ENCODE measurements at regions of chr7 and their contacts with region 1.

Region 1: DNA sequence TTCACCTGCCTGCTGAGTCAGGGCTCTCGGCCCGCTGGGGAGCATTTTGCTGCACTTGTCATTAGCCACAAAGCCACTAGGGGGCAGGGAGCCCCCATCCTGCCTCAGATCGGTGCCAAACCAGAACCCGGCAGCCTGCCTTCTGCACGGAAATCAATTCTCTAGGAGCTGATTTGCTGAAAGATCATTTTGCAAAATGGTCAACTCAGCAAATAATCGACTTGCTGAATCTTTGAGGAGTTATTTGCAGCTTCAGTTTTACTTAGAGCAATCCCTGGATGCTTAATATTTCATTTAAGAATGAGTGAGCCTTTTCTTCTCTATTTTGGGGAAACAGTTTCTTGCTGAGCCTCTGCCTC is 1.7 kb upstream of the GIMAP8 start:
- DNase-seq: peak; percentile 77 to 91 (median 83)
- H3K4me3 ChIP-seq: peak overlapping the region; percentile 36
- H3K4me3 Mint-ChIP-seq: peak overlapping the region; percentile 98 to 100 (median 99)
- H3K27ac ChIP-seq: no peak overlapping the region
- H3K27ac Mint-ChIP-seq: peak overlapping the region; percentile 78 to 98 (median 96)
- H3K4me1 ChIP-seq: peaks cover 38% of the 10 kb centered on the region
- H3K4me1 Mint-ChIP-seq: peaks cover 51 to 58% (median 52%) of the 10 kb centered on the region in 3 donors
- H3K27me3 ChIP-seq: no peaks in the 10 kb centered on the region
- H3K27me3 Mint-ChIP-seq: peaks cover 0 to 4% of the 10 kb centered on the region in 2 donors

Region 2: DNA sequence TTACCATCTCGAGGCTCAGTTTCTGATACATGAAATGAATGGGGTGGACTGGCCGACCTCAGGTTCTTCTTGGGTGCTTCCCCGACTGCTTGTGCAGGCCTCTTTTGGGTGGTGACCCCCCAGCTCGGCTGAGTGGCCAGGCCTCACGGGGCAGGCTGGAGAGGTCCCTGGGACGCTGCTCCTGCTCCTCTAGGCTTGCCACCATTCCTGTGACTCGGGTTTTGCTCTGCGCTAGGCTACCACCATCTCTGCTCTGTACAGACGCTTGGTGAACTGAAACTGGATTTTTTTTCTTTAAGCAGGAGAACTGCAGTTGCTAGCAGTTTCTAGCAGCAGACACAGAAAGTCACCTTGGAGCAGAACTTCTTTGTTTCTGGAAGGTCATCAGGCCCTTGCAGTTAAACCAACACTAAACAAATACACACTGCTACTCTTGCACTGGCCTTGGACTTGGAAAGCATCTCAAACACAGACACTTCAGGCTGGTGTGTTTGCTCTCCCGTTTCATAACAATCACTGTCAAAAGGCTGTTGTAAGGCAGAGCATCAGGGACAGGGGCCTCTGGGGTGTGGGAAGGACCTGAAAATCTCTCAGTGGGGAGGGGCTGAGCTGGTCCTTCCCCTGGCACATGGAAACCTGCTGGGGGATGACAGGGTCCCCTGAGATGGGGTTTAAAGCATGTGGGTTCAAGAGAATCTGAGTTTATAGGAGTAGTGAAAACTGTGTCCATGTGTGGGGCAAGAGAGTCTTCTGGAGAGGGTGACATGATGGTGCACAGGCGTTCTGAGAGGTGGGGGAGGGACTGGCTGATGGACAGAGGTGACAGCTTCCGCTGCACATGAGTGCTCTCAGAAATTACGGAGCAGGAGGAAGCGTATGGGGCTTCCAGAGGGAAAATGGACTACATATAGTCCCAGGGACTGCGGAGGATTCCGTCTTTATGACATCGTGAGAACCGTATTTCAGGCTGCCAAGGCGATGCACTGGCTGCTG is 33.3 kb before region 1 on chr7:
- CTCF ChIA-PET with region 1: no interaction called
- POLR2A ChIA-PET with region 1: no interaction called
- DNase-seq: no peak
- H3K4me3 ChIP-seq: no peak overlapping the region
- H3K4me3 Mint-ChIP-seq: no peak overlapping the region
- H3K27ac ChIP-seq: no peak overlapping the region
- H3K27ac Mint-ChIP-seq: peak overlapping the region in 2 of 8 donors; percentile 23 to 64
- H3K4me1 ChIP-seq: no peaks in the 10 kb centered on the region
- H3K4me1 Mint-ChIP-seq: no peaks in the 10 kb centered on the region
- H3K27me3 ChIP-seq: no peaks in the 10 kb centered on the region
- H3K27me3 Mint-ChIP-seq: no peaks in the 10 kb centered on the region

Region 3: GRCh38 chr7:150481186-150481920 is 32.6 kb after region 1 on chr7:
- CTCF ChIA-PET with region 1: interaction called, 45 read pairs
- POLR2A ChIA-PET with region 1: interaction called, 33 read pairs
- DNase-seq: peak; percentile 32 to 78 (median 68)
- H3K4me3 ChIP-seq: peak overlapping the region; percentile 40
- H3K4me3 Mint-ChIP-seq: peak overlapping the region; percentile 72 to 91 (median 88)
- H3K27ac ChIP-seq: peak overlapping the region; percentile 75
- H3K27ac Mint-ChIP-seq: peak overlapping the region; percentile 94 to 100 (median 98)
- H3K4me1 ChIP-seq: peaks cover 98% of the 10 kb centered on the region
- H3K4me1 Mint-ChIP-seq: peaks cover 89 to 99% (median 98%) of the 10 kb centered on the region in 3 donors
- H3K27me3 ChIP-seq: no peaks in the 10 kb centered on the region
- H3K27me3 Mint-ChIP-seq: peaks cover 0 to 1% of the 10 kb centered on the region in 2 donors

Region 4: GRCh38 chr7:150514748-150515222 is 66.0 kb after region 1 on chr7 and contains the start of gene GIMAP7:
- CTCF ChIA-PET with region 1: interaction called, 99 read pairs
- POLR2A ChIA-PET with region 1: interaction called, 76 read pairs
- DNase-seq: peak; percentile 7 to 84 (median 68)
- H3K4me3 ChIP-seq: peak within 1 kb of the TSS; percentile 97
- H3K4me3 Mint-ChIP-seq: peak within 1 kb of the TSS; percentile 98 to 100 (median 100)
- H3K27ac ChIP-seq: peak within 1 kb of the TSS; percentile 77
- H3K27ac Mint-ChIP-seq: peak within 1 kb of the TSS; percentile 90 to 99 (median 96)
- H3K4me1 ChIP-seq: peaks cover 46% of the 10 kb centered on the region
- H3K4me1 Mint-ChIP-seq: peaks cover 45 to 49% (median 49%) of the 10 kb centered on the region in 3 donors
- H3K27me3 ChIP-seq: no peaks in the 10 kb centered on the region
- H3K27me3 Mint-ChIP-seq: no peaks in the 10 kb centered on the region
- total RNA-seq, gene GIMAP7: 47.3 to 51.4 TPM

Region 5: GRCh38 chr7:150567169-150567568 is 118.4 kb after region 1 on chr7 and contains the start of gene GIMAP4:
- CTCF ChIA-PET with region 1: interaction called, 27 read pairs
- POLR2A ChIA-PET with region 1: interaction called, 15 read pairs
- DNase-seq: peak in 2 of 5 donors; percentile 36 to 56
- H3K4me3 ChIP-seq: peak within 1 kb of the TSS; percentile 90
- H3K4me3 Mint-ChIP-seq: peak within 1 kb of the TSS; percentile 97 to 100 (median 100)
- H3K27ac ChIP-seq: peak within 1 kb of the TSS; percentile 67
- H3K27ac Mint-ChIP-seq: peak within 1 kb of the TSS; percentile 86 to 99 (median 98)
- H3K4me1 ChIP-seq: peaks cover 74% of the 10 kb centered on the region
- H3K4me1 Mint-ChIP-seq: peaks cover 72 to 86% (median 85%) of the 10 kb centered on the region in 3 donors
- H3K27me3 ChIP-seq: no peaks in the 10 kb centered on the region
- H3K27me3 Mint-ChIP-seq: peaks cover 0 to 4% of the 10 kb centered on the region in 2 donors
- total RNA-seq, gene GIMAP4: 57.3 to 59.3 TPM

Region 6: DNA sequence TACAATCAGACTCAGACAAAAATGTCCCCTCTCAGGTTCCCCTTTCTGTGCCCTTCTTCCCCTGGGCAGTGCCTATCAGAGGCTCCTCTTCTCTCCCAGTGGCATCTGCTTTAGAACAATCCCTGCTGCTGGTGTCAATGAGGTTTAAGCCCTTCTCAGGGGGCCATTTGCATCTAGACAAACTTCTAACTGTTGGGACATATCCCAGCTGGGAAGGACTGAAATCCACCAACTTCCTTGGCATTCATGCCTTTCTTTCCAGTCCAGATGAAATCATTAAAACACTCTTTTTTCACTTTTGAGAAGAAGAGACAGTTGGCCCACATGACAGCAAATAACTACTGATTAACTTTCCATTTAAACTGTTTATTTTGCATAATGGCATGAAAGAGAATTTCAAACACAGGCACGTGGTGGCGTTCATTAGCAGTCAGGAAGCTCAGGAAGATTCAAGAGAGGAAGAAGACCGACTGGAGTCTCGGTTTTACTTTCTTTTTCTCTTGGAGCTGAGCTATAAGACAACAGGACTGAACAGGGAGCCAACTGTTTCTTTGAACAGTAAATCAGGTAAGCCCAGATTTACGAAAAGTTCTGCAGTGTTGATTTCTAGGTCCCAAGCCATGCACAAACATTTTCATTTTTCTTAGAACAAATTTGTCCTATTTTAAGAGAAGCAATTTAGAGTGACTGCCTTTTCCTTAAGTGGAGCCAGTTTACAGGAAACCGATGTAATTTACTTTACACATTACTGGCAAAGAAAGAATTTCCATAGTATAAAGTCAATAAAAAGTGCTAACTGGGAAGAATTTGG is 236.7 kb after region 1 on chr7 and contains the start of gene GIMAP2:
- CTCF ChIA-PET with region 1: interaction called, 10 read pairs
- POLR2A ChIA-PET with region 1: interaction called, 3 read pairs
- DNase-seq: peak in 3 of 5 donors; percentile 57 to 67 (median 59)
- H3K4me3 ChIP-seq: peak within 1 kb of the TSS; percentile 79
- H3K4me3 Mint-ChIP-seq: peak within 1 kb of the TSS; percentile 94 to 100 (median 97)
- H3K27ac ChIP-seq: peak within 1 kb of the TSS; percentile 60
- H3K27ac Mint-ChIP-seq: peak within 1 kb of the TSS; percentile 93 to 100 (median 97)
- H3K4me1 ChIP-seq: peaks cover 56% of the 10 kb centered on the region
- H3K4me1 Mint-ChIP-seq: peaks cover 76 to 93% (median 83%) of the 10 kb centered on the region in 3 donors
- H3K27me3 ChIP-seq: no peaks in the 10 kb centered on the region
- H3K27me3 Mint-ChIP-seq: no peaks in the 10 kb centered on the region
- total RNA-seq, gene GIMAP2: 40.4 to 42.9 TPM

Region 7: GRCh38 chr7:150737265-150738055 is 288.7 kb after region 1 on chr7 and contains the start of gene GIMAP5:
- CTCF ChIA-PET with region 1: interaction called, 60 read pairs
- POLR2A ChIA-PET with region 1: interaction called, 7 read pairs
- DNase-seq: peak in 4 of 5 donors; percentile 31 to 66 (median 52)
- H3K4me3 ChIP-seq: peak within 1 kb of the TSS; percentile 97
- H3K4me3 Mint-ChIP-seq: peak within 1 kb of the TSS; percentile 91 to 100 (median 97)
- H3K27ac ChIP-seq: peak within 1 kb of the TSS; percentile 82
- H3K27ac Mint-ChIP-seq: peak within 1 kb of the TSS; percentile 73 to 99 (median 96)
- H3K4me1 ChIP-seq: peaks cover 67% of the 10 kb centered on the region
- H3K4me1 Mint-ChIP-seq: peaks cover 64 to 74% (median 70%) of the 10 kb centered on the region in 3 donors
- H3K27me3 ChIP-seq: no peaks in the 10 kb centered on the region
- H3K27me3 Mint-ChIP-seq: no peaks in the 10 kb centered on the region
- total RNA-seq, gene GIMAP5: 63.9 to 70.4 TPM

Region 8: DNA sequence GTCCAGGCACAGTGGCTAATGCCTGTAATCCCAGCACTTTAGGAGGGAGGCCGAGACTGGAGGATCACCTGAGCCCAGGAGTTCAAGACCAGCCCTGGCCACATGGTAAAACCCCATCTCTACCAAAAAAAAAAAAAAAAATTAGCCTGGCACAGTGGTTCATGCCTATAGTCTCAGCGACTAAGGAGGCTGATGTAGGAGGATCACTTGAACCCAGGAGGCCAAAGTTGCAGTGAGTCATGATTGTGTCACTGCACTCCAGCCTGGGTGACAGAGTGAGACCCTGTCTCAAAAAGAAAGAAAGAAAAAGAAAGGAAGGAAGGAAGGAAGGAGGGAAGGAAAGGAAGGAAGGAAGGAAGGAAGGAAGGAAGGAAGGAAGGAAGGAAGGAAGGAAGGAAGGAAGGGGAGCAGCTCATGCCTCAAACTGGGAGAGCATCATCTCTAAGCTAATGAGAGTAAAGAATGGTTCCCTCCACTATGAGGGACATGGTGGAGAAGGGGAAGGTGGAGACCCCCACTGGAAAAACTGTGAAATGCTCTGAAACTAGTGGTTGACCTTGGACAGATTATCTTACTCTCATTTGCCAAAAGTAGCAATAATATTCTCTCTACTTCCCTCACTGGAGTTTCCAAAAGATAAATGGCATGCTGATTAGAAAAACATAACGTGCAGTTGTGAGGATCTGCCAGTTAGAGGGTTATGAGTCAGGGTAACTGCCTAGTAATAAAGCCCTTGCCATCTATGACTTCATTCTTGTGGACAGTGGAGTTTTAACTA is 305.2 kb after region 1 on chr7:
- CTCF ChIA-PET with region 1: interaction called, 60 read pairs
- POLR2A ChIA-PET with region 1: interaction called, 18 read pairs
- DNase-seq: no peak
- H3K4me3 ChIP-seq: peak overlapping the region; percentile 15
- H3K4me3 Mint-ChIP-seq: peak overlapping the region in 6 of 7 donors; percentile 33 to 66 (median 54)
- H3K27ac ChIP-seq: no peak overlapping the region
- H3K27ac Mint-ChIP-seq: peak overlapping the region; percentile 75 to 97 (median 88)
- H3K4me1 ChIP-seq: peaks cover 79% of the 10 kb centered on the region
- H3K4me1 Mint-ChIP-seq: peaks cover 65 to 82% (median 81%) of the 10 kb centered on the region in 3 donors
- H3K27me3 ChIP-seq: no peaks in the 10 kb centered on the region
- H3K27me3 Mint-ChIP-seq: peaks cover 0 to 3% of the 10 kb centered on the region in 2 donors